Naive thymus-derived CD4-positive, alpha-beta T cell (primary cell): ENCODE measurements at regions of chr14 and their contacts with region 1.

Region 1: GRCh38 chr14:69766984-69767368 is at the start of gene SRSF5:
- DNase-seq: peak; percentile 88 to 95 (median 93)
- ATAC-seq: peak; percentile 90
- H3K4me3 ChIP-seq: peak within 1 kb of the TSS; percentile 100
- H3K4me3 Mint-ChIP-seq: peak within 1 kb of the TSS; percentile 94 to 100 (median 99)
- H3K27ac ChIP-seq: peak within 1 kb of the TSS; percentile 100
- H3K27ac Mint-ChIP-seq: peak within 1 kb of the TSS; percentile 100
- H3K4me1 ChIP-seq: peaks cover 33 to 50% of the 10 kb centered on the region in 2 donors
- H3K4me1 Mint-ChIP-seq: peaks cover 49 to 86% (median 78%) of the 10 kb centered on the region in 7 donors
- H3K27me3 ChIP-seq: no peaks in the 10 kb centered on the region
- H3K27me3 Mint-ChIP-seq: peaks cover 0 to 4% (median 0%) of the 10 kb centered on the region in 5 donors
- total RNA-seq, gene SRSF5: 355 to 1,361 (median 1,191) TPM

Region 2: DNA sequence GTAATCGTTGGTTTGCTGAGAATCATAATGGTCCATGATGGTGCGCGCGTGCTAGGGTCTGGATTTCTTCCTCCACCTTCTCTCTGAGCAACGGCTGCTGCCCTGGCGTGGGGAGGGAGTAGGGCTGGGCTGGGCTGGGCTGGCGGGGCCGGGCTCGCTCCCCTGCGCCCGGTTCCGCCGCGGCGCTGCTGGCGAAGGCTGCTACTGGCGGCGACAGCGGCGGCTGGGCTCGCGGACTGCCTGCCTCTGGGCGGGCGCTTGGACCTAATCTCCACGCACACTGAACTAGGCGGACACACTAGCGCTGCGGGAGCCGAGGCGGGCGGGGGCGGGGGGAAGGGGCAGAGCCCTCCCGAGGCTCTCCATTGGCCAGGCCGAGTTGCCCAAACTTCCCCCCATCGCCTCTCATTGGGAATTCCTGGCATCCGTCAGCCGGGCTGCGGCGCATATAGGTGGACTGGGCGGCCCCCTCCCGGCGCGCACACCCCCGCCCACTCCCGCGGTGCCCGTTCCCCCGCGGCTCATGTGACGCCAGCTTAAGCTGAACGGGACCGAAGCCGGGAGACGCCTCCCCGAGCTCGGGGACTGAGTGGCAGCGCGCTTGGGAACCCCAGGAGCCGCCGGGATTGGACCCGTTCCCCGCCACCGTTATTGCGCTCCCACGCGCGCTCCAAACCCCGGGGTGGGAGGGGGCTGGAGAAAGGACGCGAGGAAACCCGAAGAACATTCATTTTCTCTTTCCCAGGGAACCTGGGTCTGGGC is 787.8 kb before region 1 on chr14 and contains the start of gene ACTN1:
- CTCF ChIA-PET with region 1: no interaction called
- POLR2A ChIA-PET with region 1: no interaction called
- intact Hi-C with region 1: loop called in 1 of 2 experiments (anchors 10 kb)
- DNase-seq: peak; percentile 46 to 74 (median 70)
- ATAC-seq: peak; percentile 81
- H3K4me3 ChIP-seq: peak within 1 kb of the TSS; percentile 83
- H3K4me3 Mint-ChIP-seq: peak within 1 kb of the TSS; percentile 75 to 98 (median 94)
- H3K27ac ChIP-seq: peak within 1 kb of the TSS; percentile 87
- H3K27ac Mint-ChIP-seq: peak within 1 kb of the TSS; percentile 81 to 100 (median 98)
- H3K4me1 ChIP-seq: peaks cover 5 to 33% of the 10 kb centered on the region in 2 donors
- H3K4me1 Mint-ChIP-seq: peaks cover 29 to 59% (median 47%) of the 10 kb centered on the region in 7 donors
- H3K27me3 ChIP-seq: no peaks in the 10 kb centered on the region
- H3K27me3 Mint-ChIP-seq: peaks cover 0 to 36% (median 0%) of the 10 kb centered on the region in 5 donors
- total RNA-seq, gene ACTN1: 41.3 to 249 (median 227) TPM

Region 3: GRCh38 chr14:69611201-69612011 is 155.6 kb before region 1 on chr14 and contains the start of gene SUSD6:
- CTCF ChIA-PET with region 1: no interaction called
- POLR2A ChIA-PET with region 1: interaction called, 62 read pairs
- intact Hi-C with region 1: loop called (anchors 1 kb)
- DNase-seq: peak; percentile 79 to 87 (median 85)
- ATAC-seq: peak; percentile 88
- H3K4me3 ChIP-seq: peak within 1 kb of the TSS; percentile 91
- H3K4me3 Mint-ChIP-seq: peak within 1 kb of the TSS; percentile 91 to 98 (median 94)
- H3K27ac ChIP-seq: peak within 1 kb of the TSS; percentile 85
- H3K27ac Mint-ChIP-seq: peak within 1 kb of the TSS; percentile 95 to 99 (median 98)
- H3K4me1 ChIP-seq: peaks cover 38 to 54% of the 10 kb centered on the region in 2 donors
- H3K4me1 Mint-ChIP-seq: peaks cover 44 to 69% (median 63%) of the 10 kb centered on the region in 7 donors
- H3K27me3 ChIP-seq: no peaks in the 10 kb centered on the region
- H3K27me3 Mint-ChIP-seq: no peaks in the 10 kb centered on the region
- total RNA-seq, gene SUSD6: 42.9 to 90.8 (median 65.0) TPM

Region 4: GRCh38 chr14:69726761-69727511 is 40.0 kb before region 1 on chr14:
- CTCF ChIA-PET with region 1: interaction called, 8 read pairs
- POLR2A ChIA-PET with region 1: interaction called, 11 read pairs
- intact Hi-C with region 1: loop called in 1 of 2 experiments (anchors 1 kb)
- DNase-seq: peak; percentile 56 to 88 (median 77)
- ATAC-seq: peak; percentile 94
- H3K4me3 ChIP-seq: peak overlapping the region; percentile 72
- H3K4me3 Mint-ChIP-seq: peak overlapping the region; percentile 20 to 81 (median 58)
- H3K27ac ChIP-seq: peak overlapping the region; percentile 46
- H3K27ac Mint-ChIP-seq: peak overlapping the region in 6 of 9 donors; percentile 27 to 79 (median 57)
- H3K4me1 ChIP-seq: peaks cover 0 to 11% of the 10 kb centered on the region in 2 donors
- H3K4me1 Mint-ChIP-seq: peaks cover 0 to 36% (median 13%) of the 10 kb centered on the region in 7 donors
- H3K27me3 ChIP-seq: no peaks in the 10 kb centered on the region
- H3K27me3 Mint-ChIP-seq: peaks cover 0 to under 1% (median 0%) of the 10 kb centered on the region in 5 donors

Region 5: DNA sequence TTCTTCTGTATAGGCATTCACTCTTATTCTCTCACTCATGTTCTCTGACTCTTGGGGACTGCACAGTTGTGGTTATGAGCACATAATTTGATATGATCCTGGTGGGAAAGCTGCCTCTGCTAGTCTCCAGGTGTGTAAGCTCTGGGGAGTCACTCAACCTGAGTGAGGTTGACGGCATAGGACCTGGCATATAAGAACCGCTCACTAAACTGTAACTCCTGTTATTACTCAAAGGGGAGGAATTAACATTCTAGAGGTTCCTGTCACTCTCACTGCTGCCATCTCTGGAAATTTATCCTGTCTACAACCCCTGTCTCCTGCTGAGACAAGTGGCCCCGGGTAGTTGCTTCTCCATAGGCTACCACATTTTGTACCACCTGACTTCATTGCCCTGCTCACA is 14.0 kb after region 1 on chr14:
- CTCF ChIA-PET with region 1: interaction called, 3 read pairs
- POLR2A ChIA-PET with region 1: interaction called, 18 read pairs
- intact Hi-C with region 1: no loop called
- DNase-seq: no peak
- ATAC-seq: no peak
- H3K4me3 ChIP-seq: no peak overlapping the region
- H3K4me3 Mint-ChIP-seq: no peak overlapping the region
- H3K27ac ChIP-seq: no peak overlapping the region
- H3K27ac Mint-ChIP-seq: peak overlapping the region in 4 of 9 donors; percentile 9 to 70 (median 38)
- H3K4me1 ChIP-seq: peaks cover 4 to 8% of the 10 kb centered on the region in 2 donors
- H3K4me1 Mint-ChIP-seq: peaks cover 20 to 46% (median 44%) of the 10 kb centered on the region in 7 donors
- H3K27me3 ChIP-seq: no peaks in the 10 kb centered on the region
- H3K27me3 Mint-ChIP-seq: no peaks in the 10 kb centered on the region

Region 6: GRCh38 chr14:69838881-69839416 is 72.0 kb after region 1 on chr14:
- CTCF ChIA-PET with region 1: no interaction called
- POLR2A ChIA-PET with region 1: no interaction called
- intact Hi-C with region 1: no loop called
- DNase-seq: no peak
- ATAC-seq: no peak
- H3K4me3 ChIP-seq: no peak overlapping the region
- H3K4me3 Mint-ChIP-seq: no peak overlapping the region
- H3K27ac ChIP-seq: no peak overlapping the region
- H3K27ac Mint-ChIP-seq: no peak overlapping the region
- H3K4me1 ChIP-seq: no peaks in the 10 kb centered on the region
- H3K4me1 Mint-ChIP-seq: no peaks in the 10 kb centered on the region
- H3K27me3 ChIP-seq: no peaks in the 10 kb centered on the region
- H3K27me3 Mint-ChIP-seq: peaks cover 0 to 15% (median 8%) of the 10 kb centered on the region in 5 donors

Region 7: GRCh38 chr14:70415788-70416187 is 648.8 kb after region 1 on chr14:
- CTCF ChIA-PET with region 1: no interaction called
- POLR2A ChIA-PET with region 1: no interaction called
- intact Hi-C with region 1: no loop called
- DNase-seq: no peak
- ATAC-seq: no peak
- H3K4me3 ChIP-seq: peak overlapping the region; percentile 40
- H3K4me3 Mint-ChIP-seq: peak overlapping the region; percentile 69 to 97 (median 94)
- H3K27ac ChIP-seq: no peak overlapping the region
- H3K27ac Mint-ChIP-seq: peak overlapping the region in 7 of 9 donors; percentile 1 to 93 (median 85)
- H3K4me1 ChIP-seq: peaks cover 0 to 14% of the 10 kb centered on the region in 2 donors
- H3K4me1 Mint-ChIP-seq: peaks cover 12 to 60% (median 54%) of the 10 kb centered on the region in 7 donors
- H3K27me3 ChIP-seq: no peaks in the 10 kb centered on the region
- H3K27me3 Mint-ChIP-seq: peaks cover 0 to 4% (median 0%) of the 10 kb centered on the region in 5 donors